ENCODE measurements at regions of chr10 and their contacts with region 1.

Region 1: DNA sequence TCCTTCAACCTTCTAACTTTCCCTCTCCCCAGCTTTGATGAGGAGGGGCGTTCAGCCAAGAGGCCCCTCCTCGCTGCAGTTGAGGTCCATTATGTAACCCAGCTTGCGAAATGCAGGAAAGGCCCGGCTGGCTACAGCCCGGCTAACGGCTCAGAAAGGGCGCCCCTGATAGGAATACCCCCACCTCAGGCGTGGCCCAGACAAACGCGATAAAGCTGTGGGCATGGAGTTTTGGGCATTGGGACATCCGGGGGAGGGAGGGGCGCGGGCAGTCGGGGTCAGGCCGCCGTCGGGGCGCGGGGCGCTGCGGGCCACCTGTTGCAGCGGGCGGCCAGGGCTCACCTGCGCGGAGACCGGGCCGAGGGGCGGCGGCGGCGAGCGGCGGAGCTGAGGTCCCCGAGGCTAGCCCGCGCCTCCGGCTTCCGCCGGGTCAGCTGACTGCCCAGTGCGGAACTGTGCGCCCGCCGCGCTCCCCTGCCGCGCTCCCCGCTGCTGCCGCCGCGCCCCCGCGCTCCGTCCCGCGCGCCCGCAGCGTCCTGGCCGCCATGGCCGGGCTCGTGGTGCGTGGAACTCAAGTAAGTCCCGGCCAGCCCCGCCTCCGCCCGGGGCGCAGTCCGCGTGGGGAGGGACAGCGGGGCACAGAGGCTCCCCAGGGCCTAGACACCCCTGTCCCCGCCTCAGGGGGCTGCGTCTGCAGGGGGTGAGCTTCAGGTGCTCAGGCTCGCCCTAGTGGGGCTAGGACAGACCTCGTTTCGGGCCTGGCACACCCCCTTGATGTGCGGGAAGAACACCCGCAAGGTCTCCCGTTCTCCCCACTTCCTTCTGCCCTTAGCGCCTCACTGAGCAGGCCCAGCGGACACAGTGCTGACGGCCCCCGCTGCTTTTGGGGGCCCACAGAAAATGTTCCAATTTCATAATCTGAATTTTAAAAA is at the start of gene LRMDA:
- DNase-seq: peak; percentile 83
- ATAC-seq: peak; percentile 73
- H3K4me3 ChIP-seq: peak within 1 kb of the TSS; percentile 77 to 95 (median 79)
- H3K27ac ChIP-seq: peak within 1 kb of the TSS; percentile 92
- H3K4me1 ChIP-seq: peaks cover 84% of the 10 kb centered on the region
- H3K27me3 ChIP-seq: no peaks in the 10 kb centered on the region
- CTCF ChIP-seq: peak; percentile 20; the same call in 1 of the 2 replicates
- EP300 ChIP-seq: peak; percentile 4 to 70; a peak in 2 of 4 replicates
- POLR2A ChIP-seq: peak in 1 of 2 experiments; percentile 14; a peak in 2 of 4 replicates
- RAD21 ChIP-seq: peak; percentile 66; the same call in 1 of the 2 replicates
- total RNA-seq, gene LRMDA: 19.3 and 22.0 TPM in 2 replicates

Region 2: GRCh38 chr10:74855027-74855426 is 576.4 kb before region 1 on chr10:
- CTCF ChIA-PET with region 1: no interaction called
- POLR2A ChIA-PET with region 1: no interaction called
- in situ Hi-C with region 1: no loop called
- intact Hi-C with region 1: no loop called
- DNase-seq: no peak
- ATAC-seq: no peak
- H3K4me3 ChIP-seq: no peak overlapping the region
- H3K27ac ChIP-seq: no peak overlapping the region
- H3K4me1 ChIP-seq: no peaks in the 10 kb centered on the region
- H3K27me3 ChIP-seq: no peaks in the 10 kb centered on the region
- CTCF ChIP-seq: no peak
- EP300 ChIP-seq: no peak
- POLR2A ChIP-seq: no peak
- RAD21 ChIP-seq: no peak

Region 3: GRCh38 chr10:75408911-75409885 is 22.2 kb before region 1 on chr10:
- CTCF ChIA-PET with region 1: no interaction called
- POLR2A ChIA-PET with region 1: interaction called, 219 read pairs
- in situ Hi-C with region 1: no loop called
- intact Hi-C with region 1: no loop called
- DNase-seq: no peak
- ATAC-seq: peak; percentile 68
- H3K4me3 ChIP-seq: peak overlapping the region; percentile 84 to 91 (median 87)
- H3K27ac ChIP-seq: peak overlapping the region; percentile 86
- H3K4me1 ChIP-seq: peaks cover 20% of the 10 kb centered on the region
- H3K27me3 ChIP-seq: no peaks in the 10 kb centered on the region
- CTCF ChIP-seq: no peak; the same call in 1 of the 2 replicates
- EP300 ChIP-seq: no peak
- POLR2A ChIP-seq: no peak; a peak in 1 of 4 replicates
- RAD21 ChIP-seq: 0 out of 2 replicates have a peak, but pooled peaks have one; percentile 14

Region 4: GRCh38 chr10:75497997-75498883 is 66.8 kb after region 1 on chr10:
- CTCF ChIA-PET with region 1: no interaction called
- POLR2A ChIA-PET with region 1: interaction called, 5 read pairs
- in situ Hi-C with region 1: loop called (anchors 5 kb)
- intact Hi-C with region 1: loop called (anchors 5 kb)
- DNase-seq: no peak
- ATAC-seq: no peak
- H3K4me3 ChIP-seq: no peak overlapping the region
- H3K27ac ChIP-seq: no peak overlapping the region
- H3K4me1 ChIP-seq: peaks cover 54% of the 10 kb centered on the region
- H3K27me3 ChIP-seq: no peaks in the 10 kb centered on the region
- CTCF ChIP-seq: no peak
- EP300 ChIP-seq: no peak
- POLR2A ChIP-seq: no peak
- RAD21 ChIP-seq: no peak

Region 5: DNA sequence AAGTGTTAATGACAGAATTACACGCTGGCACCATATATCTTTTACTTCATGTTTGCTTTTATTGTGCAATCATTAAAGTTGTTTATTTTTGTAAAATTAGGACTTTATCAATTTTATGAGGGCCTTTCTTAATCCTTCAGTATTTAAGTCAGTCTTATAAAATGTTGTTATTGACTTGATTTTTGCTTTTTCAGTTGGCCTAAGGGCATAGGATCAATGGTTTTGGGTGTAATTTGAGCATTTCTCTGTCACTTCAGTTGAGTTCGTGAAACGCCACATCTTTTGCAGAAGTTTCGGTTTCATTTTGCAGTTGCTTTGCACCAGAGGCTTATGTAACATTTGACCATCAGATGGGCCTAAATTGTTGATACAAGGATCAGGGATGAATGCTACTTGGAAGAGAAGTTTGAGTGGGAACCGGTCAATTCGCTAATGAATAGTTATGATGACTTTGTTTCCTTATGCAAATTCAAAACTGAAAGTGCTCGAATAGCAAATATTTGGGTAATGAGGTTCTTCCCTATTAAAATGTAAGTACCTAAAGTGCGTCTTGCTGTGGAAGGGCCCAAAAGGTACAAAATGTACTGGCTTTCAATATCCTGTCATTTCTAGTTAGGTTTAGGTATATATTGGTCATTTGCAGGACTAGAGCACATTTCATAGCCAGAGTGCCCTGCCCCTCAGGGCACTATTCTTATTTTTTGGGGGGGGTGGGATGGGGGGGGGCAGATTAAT is 340.9 kb after region 1 on chr10:
- CTCF ChIA-PET with region 1: no interaction called
- POLR2A ChIA-PET with region 1: interaction called, 21 read pairs
- in situ Hi-C with region 1: no loop called
- intact Hi-C with region 1: no loop called
- DNase-seq: no peak
- ATAC-seq: no peak
- H3K4me3 ChIP-seq: no peak overlapping the region
- H3K27ac ChIP-seq: peak overlapping the region; percentile 13
- H3K4me1 ChIP-seq: peaks cover 69% of the 10 kb centered on the region
- H3K27me3 ChIP-seq: no peaks in the 10 kb centered on the region
- CTCF ChIP-seq: no peak
- EP300 ChIP-seq: no peak
- POLR2A ChIP-seq: no peak
- RAD21 ChIP-seq: no peak

Region 6: GRCh38 chr10:76036111-76036940 is 604.9 kb after region 1 on chr10:
- CTCF ChIA-PET with region 1: no interaction called
- POLR2A ChIA-PET with region 1: interaction called, 10 read pairs
- in situ Hi-C with region 1: no loop called
- intact Hi-C with region 1: no loop called
- DNase-seq: no peak
- ATAC-seq: 0 out of 3 replicates have a peak, but pooled peaks have one; percentile 15
- H3K4me3 ChIP-seq: no peak overlapping the region
- H3K27ac ChIP-seq: peak overlapping the region; percentile 97
- H3K4me1 ChIP-seq: peaks cover 57% of the 10 kb centered on the region
- H3K27me3 ChIP-seq: no peaks in the 10 kb centered on the region; a peak in 1 of 5 replicates
- CTCF ChIP-seq: peak; percentile 85
- EP300 ChIP-seq: no peak
- POLR2A ChIP-seq: no peak
- RAD21 ChIP-seq: peak; percentile 79

Measured in HepG2 (cell line).